ENCODE measurements at regions of chr5 and their contacts with region 1.

Region 1: GRCh38 chr5:173283318-173284288 is 44.6 kb downstream of the STC2 start:
- DNase-seq: peak; percentile 78
- ATAC-seq: peak; percentile 94
- H3K4me3 ChIP-seq: peak overlapping the region; percentile 60
- H3K27ac ChIP-seq: no peak overlapping the region
- H3K4me1 ChIP-seq: no peaks in the 10 kb centered on the region
- H3K27me3 ChIP-seq: no peaks in the 10 kb centered on the region
- CTCF ChIP-seq: peak; percentile 77

Region 2: GRCh38 chr5:173016621-173017047 is 267.0 kb before region 1 on chr5:
- CTCF ChIA-PET with region 1: interaction called, 10 read pairs
- POLR2A ChIA-PET with region 1: no interaction called
- intact Hi-C with region 1: no loop called
- DNase-seq: peak; percentile 77
- ATAC-seq: peak; percentile 94
- H3K4me3 ChIP-seq: no peak overlapping the region
- H3K27ac ChIP-seq: peak overlapping the region; percentile 58
- H3K4me1 ChIP-seq: peaks cover 22% of the 10 kb centered on the region
- H3K27me3 ChIP-seq: no peaks in the 10 kb centered on the region
- CTCF ChIP-seq: no peak

Region 3: DNA sequence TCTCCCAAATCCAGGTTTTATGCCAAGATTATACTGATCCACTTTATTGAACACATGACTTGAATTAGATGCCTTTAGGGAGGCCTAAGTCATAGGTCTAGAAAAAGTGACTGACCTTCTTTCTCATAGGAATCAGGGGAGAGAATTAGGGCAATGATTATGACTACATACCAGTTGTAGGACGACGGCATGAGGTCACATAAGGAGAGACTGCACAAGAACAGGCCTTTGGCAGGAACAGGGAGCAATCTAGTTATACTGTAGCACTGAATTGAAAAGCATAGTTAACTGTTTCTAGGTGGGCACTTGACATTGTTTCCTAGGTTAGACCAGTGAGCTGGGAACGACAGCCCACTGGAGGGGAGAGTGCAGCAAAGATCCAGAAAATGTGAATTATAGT is 204.7 kb before region 1 on chr5:
- CTCF ChIA-PET with region 1: no interaction called
- POLR2A ChIA-PET with region 1: no interaction called
- intact Hi-C with region 1: no loop called
- DNase-seq: no peak
- ATAC-seq: no peak
- H3K4me3 ChIP-seq: no peak overlapping the region
- H3K27ac ChIP-seq: no peak overlapping the region
- H3K4me1 ChIP-seq: peaks cover 12% of the 10 kb centered on the region
- H3K27me3 ChIP-seq: no peaks in the 10 kb centered on the region
- CTCF ChIP-seq: no peak

Region 4: GRCh38 chr5:173165177-173166016 is 118.2 kb before region 1 on chr5:
- CTCF ChIA-PET with region 1: no interaction called
- POLR2A ChIA-PET with region 1: no interaction called
- intact Hi-C with region 1: loop called (anchors 1 kb)
- DNase-seq: no peak
- ATAC-seq: no peak
- H3K4me3 ChIP-seq: no peak overlapping the region
- H3K27ac ChIP-seq: no peak overlapping the region
- H3K4me1 ChIP-seq: no peaks in the 10 kb centered on the region
- H3K27me3 ChIP-seq: no peaks in the 10 kb centered on the region
- CTCF ChIP-seq: no peak